CD4-positive, alpha-beta T cell (primary cell): ENCODE measurements at regions of chr22 and their contacts with region 1.

Region 1: DNA sequence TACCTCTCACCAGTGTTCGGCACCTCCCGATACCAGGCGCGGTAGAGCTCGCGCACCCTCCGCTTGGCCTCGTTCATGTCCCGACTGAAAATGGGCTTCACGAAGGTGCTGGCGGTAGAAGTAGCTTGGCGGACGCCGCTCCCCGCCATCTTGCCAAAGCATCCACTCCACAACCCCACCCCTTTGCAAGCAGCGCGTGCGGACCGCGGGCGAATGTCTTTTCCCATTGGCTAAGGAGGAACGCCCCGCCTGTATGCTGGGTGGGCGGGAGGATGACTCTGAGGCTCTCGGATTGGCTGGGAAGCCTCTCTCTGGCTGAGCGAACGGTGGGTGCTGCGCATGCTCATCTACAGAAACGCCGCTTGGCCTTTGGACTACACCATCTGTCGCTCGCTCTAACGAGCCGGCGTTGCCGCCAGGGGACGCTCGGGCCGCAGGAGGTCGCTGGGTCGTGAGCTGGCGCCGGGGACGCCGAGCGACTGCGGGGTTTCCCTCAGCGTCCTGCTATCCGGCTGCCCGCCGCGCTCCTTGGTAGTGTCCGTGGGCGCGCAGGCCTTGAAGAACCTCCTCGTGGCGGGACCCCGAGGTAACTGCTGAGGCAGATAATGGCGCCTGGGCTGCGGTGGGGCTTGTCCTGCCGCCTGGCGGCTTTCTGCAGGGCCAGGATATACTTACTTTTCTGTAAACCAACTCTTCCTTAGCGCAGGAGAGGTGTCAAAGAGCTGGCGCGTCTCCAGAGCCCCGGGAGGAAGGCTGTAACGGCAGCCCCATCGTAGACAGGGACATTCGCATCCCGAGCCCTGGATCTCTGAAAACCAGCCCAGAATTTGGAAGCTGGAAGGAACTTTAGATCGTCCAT is at the start of gene NDUFA6:
- DNase-seq: peak; percentile 94 to 100 (median 98)
- ATAC-seq: peak; percentile 88
- H3K4me3 ChIP-seq: peak within 1 kb of the TSS; percentile 99
- H3K4me3 Mint-ChIP-seq: peak within 1 kb of the TSS; percentile 100
- H3K27ac ChIP-seq: peak within 1 kb of the TSS; percentile 97 to 99
- H3K27ac Mint-ChIP-seq: peak within 1 kb of the TSS; percentile 100
- H3K4me1 ChIP-seq: peaks cover 35% of the 10 kb centered on the region
- H3K4me1 Mint-ChIP-seq: peaks cover 39% of the 10 kb centered on the region
- H3K27me3 ChIP-seq: no peaks in the 10 kb centered on the region
- H3K27me3 Mint-ChIP-seq: no peaks in the 10 kb centered on the region
- CTCF ChIP-seq: peak; percentile 94
- total RNA-seq, gene NDUFA6: 52.8 to 59.8 TPM

Region 2: GRCh38 chr22:41998361-41999275 is 92.2 kb before region 1 on chr22 and contains the start of gene WBP2NL:
- CTCF ChIA-PET with region 1: interaction called, 5 read pairs
- POLR2A ChIA-PET with region 1: interaction called, 12 read pairs
- intact Hi-C with region 1: no loop called
- DNase-seq: peak; percentile 77 to 94 (median 88)
- ATAC-seq: peak; percentile 95
- H3K4me3 ChIP-seq: peak within 1 kb of the TSS; percentile 73
- H3K4me3 Mint-ChIP-seq: peak within 1 kb of the TSS; percentile 93
- H3K27ac ChIP-seq: peak within 1 kb of the TSS in 1 of 2 donors; percentile 61
- H3K27ac Mint-ChIP-seq: peak within 1 kb of the TSS; percentile 73
- H3K4me1 ChIP-seq: peaks cover 23% of the 10 kb centered on the region
- H3K4me1 Mint-ChIP-seq: peaks cover 23% of the 10 kb centered on the region
- H3K27me3 ChIP-seq: no peaks in the 10 kb centered on the region
- H3K27me3 Mint-ChIP-seq: no peaks in the 10 kb centered on the region
- CTCF ChIP-seq: no peak
- total RNA-seq, gene WBP2NL: 0.38 to 1.7 TPM

Region 3: GRCh38 chr22:42079319-42080251 is 11.2 kb before region 1 on chr22 and contains the start of gene SMDT1:
- CTCF ChIA-PET with region 1: interaction called, 49 read pairs
- POLR2A ChIA-PET with region 1: interaction called, 161 read pairs
- intact Hi-C with region 1: loop called (anchors 1 kb)
- DNase-seq: peak; percentile 96 to 99 (median 98)
- ATAC-seq: peak; percentile 91
- H3K4me3 ChIP-seq: peak within 1 kb of the TSS; percentile 73
- H3K4me3 Mint-ChIP-seq: peak within 1 kb of the TSS; percentile 93
- H3K27ac ChIP-seq: peak within 1 kb of the TSS; percentile 98 to 99
- H3K27ac Mint-ChIP-seq: peak within 1 kb of the TSS; percentile 97
- H3K4me1 ChIP-seq: peaks cover 50% of the 10 kb centered on the region
- H3K4me1 Mint-ChIP-seq: peaks cover 56% of the 10 kb centered on the region
- H3K27me3 ChIP-seq: no peaks in the 10 kb centered on the region
- H3K27me3 Mint-ChIP-seq: no peaks in the 10 kb centered on the region
- CTCF ChIP-seq: no peak
- total RNA-seq, gene SMDT1: 84.7 to 86.4 TPM

Region 4: GRCh38 chr22:42134100-42135020 is 43.5 kb after region 1 on chr22:
- CTCF ChIA-PET with region 1: interaction called, 3 read pairs
- POLR2A ChIA-PET with region 1: interaction called, 7 read pairs
- intact Hi-C with region 1: loop called in 1 of 2 experiments (anchors 5 kb)
- DNase-seq: no peak
- ATAC-seq: no peak
- H3K4me3 ChIP-seq: no peak overlapping the region
- H3K4me3 Mint-ChIP-seq: no peak overlapping the region
- H3K27ac ChIP-seq: no peak overlapping the region
- H3K27ac Mint-ChIP-seq: no peak overlapping the region
- H3K4me1 ChIP-seq: no peaks in the 10 kb centered on the region
- H3K4me1 Mint-ChIP-seq: peaks cover 9% of the 10 kb centered on the region
- H3K27me3 ChIP-seq: no peaks in the 10 kb centered on the region
- H3K27me3 Mint-ChIP-seq: no peaks in the 10 kb centered on the region
- CTCF ChIP-seq: no peak

Region 5: DNA sequence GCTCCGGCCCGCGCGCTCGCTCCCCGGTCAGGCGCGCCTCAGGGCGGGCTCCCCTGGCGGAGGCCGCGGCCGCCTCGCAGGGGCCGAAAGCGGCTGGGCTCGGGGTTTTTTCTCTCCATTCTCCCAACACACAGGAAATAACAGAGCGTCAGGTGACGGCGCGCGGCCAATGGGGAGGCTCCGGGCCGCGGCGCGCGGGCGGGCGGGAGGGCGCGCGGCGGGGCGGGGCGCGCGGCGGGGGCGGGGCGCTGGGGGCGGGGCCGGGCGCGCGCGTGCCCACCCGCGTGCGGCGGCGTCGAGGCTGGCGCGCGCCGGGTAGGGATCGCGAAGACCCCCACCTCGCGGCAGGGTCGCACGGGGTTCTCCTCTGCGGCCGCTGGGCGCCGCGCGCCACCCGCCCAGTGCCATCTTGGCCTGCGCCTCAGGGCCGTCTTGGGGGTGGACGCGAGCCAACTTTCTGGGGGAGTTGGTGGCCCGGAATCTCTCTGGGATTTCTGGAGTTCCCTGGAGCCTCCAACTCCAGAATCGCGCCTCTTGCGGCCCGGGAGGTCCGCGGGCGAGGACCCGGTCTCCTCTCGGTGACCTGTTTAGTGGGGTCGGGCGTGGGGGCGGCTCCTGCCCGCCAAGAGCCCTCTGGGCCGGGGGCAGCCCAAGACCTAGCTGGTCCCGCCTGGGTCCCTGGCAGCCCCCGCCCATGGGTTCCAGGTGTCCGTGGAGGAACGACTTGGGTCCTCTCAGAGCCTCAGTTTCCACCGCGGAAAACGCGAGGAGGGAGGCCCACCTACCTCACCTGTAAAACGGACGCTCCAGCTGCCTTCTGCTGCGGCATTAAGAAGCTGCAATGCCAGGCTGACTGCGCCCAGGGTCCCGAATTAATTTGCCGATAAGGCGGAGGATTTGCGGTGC is 179.9 kb after region 1 on chr22 and contains the start of gene TCF20:
- CTCF ChIA-PET with region 1: no interaction called
- POLR2A ChIA-PET with region 1: no interaction called
- intact Hi-C with region 1: loop called in 1 of 2 experiments (anchors 5 kb)
- DNase-seq: peak; percentile 58 to 92 (median 74)
- ATAC-seq: peak; percentile 79
- H3K4me3 ChIP-seq: peak within 1 kb of the TSS; percentile 85
- H3K4me3 Mint-ChIP-seq: peak within 1 kb of the TSS; percentile 95
- H3K27ac ChIP-seq: peak within 1 kb of the TSS; percentile 60 to 85
- H3K27ac Mint-ChIP-seq: peak within 1 kb of the TSS; percentile 87
- H3K4me1 ChIP-seq: peaks cover 43% of the 10 kb centered on the region
- H3K4me1 Mint-ChIP-seq: peaks cover 35% of the 10 kb centered on the region
- H3K27me3 ChIP-seq: no peaks in the 10 kb centered on the region
- H3K27me3 Mint-ChIP-seq: no peaks in the 10 kb centered on the region
- CTCF ChIP-seq: no peak
- total RNA-seq, gene TCF20: 61.6 to 64.1 TPM

Region 6: DNA sequence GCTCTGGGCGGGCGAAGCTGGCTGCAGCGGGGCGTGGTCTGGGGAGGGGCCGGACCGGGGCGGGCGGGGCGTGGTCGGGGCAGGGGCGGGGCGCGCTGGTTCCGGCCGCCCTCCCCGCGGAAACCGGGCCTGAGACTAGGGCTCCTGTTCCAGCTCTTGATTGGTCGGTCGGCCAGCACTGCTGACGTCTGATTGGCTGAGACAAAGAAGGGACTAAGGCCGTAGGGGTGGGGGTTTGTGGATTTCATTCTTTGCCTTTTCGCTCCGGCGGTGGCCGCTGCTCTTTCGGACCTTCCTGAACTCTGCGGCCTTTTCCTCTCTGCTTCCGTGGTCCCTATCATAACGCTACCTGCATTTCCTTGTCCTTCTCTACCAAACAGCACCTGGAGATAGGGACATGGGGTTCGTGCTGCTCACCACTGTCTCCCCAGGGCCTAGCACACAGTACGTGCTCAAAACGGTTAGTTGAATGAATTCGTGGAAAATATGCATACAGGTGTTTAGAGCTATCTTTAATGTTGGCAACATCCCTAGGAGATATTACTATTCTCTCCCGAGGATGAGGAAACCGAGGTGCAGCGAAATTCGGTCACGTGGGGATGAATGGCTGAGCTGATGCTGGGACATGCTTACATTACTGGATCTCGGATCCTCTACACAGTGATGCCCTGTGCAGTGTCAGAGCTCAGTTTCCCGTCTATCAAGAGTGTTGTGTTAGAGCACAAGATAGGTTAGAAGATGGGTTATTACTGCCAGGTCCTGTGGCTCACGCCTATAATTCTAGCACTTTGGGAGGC is 278.6 kb after region 1 on chr22:
- CTCF ChIA-PET with region 1: interaction called, 6 read pairs
- POLR2A ChIA-PET with region 1: interaction called, 3 read pairs
- intact Hi-C with region 1: loop called in 1 of 2 experiments (anchors 5 kb)
- DNase-seq: peak; percentile 66 to 91 (median 78)
- ATAC-seq: peak; percentile 94
- H3K4me3 ChIP-seq: peak overlapping the region; percentile 66
- H3K4me3 Mint-ChIP-seq: peak overlapping the region; percentile 88
- H3K27ac ChIP-seq: no peak overlapping the region
- H3K27ac Mint-ChIP-seq: peak overlapping the region; percentile 27
- H3K4me1 ChIP-seq: peaks cover 24% of the 10 kb centered on the region
- H3K4me1 Mint-ChIP-seq: peaks cover 18% of the 10 kb centered on the region
- H3K27me3 ChIP-seq: peaks cover 23 to 33% of the 10 kb centered on the region in 2 experiments
- H3K27me3 Mint-ChIP-seq: peaks cover 39% of the 10 kb centered on the region
- CTCF ChIP-seq: no peak

Region 7: GRCh38 chr22:42444077-42444904 is 353.5 kb after region 1 on chr22:
- CTCF ChIA-PET with region 1: interaction called, 22 read pairs
- POLR2A ChIA-PET with region 1: interaction called, 31 read pairs
- intact Hi-C with region 1: no loop called
- DNase-seq: peak; percentile 63 to 92 (median 80)
- ATAC-seq: peak; percentile 95
- H3K4me3 ChIP-seq: peak overlapping the region; percentile 62
- H3K4me3 Mint-ChIP-seq: peak overlapping the region; percentile 88
- H3K27ac ChIP-seq: peak overlapping the region; percentile 73 to 78
- H3K27ac Mint-ChIP-seq: peak overlapping the region; percentile 96
- H3K4me1 ChIP-seq: peaks cover 24% of the 10 kb centered on the region
- H3K4me1 Mint-ChIP-seq: peaks cover 28% of the 10 kb centered on the region
- H3K27me3 ChIP-seq: no peaks in the 10 kb centered on the region
- H3K27me3 Mint-ChIP-seq: no peaks in the 10 kb centered on the region
- CTCF ChIP-seq: peak; percentile 63